ENCODE measurements at regions of chr1 and their contacts with region 1.

Region 1: DNA sequence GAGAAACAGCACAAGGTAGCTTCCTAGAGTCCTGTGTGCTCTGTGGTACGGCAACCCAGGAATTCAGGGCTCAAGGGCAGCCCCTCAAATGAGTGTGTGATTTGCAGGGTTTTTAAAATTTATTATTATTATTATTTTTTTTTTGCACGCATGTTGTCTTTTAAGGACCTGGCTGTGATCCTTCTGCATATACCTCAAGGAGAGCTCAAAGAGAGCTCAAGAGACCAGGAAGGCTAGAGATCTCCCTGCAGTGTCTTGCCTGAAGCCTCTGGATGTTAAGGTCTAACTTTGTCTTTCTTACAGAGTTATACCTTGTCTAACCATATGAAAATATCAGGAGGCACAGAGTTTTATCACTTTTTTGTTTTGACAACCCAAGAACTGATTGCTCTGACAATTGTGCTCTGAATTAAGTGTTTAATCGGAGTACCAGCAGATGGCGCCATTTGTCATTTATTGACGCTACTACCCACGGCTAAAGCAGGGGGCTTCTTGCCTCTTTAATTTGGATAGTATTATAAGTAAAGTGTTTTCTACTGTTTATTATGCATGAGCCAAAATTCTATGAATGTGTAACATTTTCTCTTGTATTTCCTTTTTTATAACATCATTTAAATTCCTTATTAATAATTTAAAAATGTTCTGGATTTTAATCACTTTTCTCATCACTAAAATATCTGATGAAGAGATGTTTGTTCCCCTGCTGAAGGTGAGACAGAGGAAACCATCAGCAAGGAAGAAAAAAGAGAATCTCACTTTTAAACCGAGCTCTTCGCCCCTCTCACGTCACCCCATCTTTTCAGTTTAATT is 35.8 kb upstream of the LMO4 start:
- DNase-seq: peak in 8 of 9 donors; percentile 6 to 55 (median 40)
- ATAC-seq: peak; percentile 57
- H3K4me3 ChIP-seq: no peak overlapping the region
- H3K4me3 Mint-ChIP-seq: no peak overlapping the region
- H3K27ac ChIP-seq: no peak overlapping the region
- H3K27ac Mint-ChIP-seq: no peak overlapping the region
- H3K4me1 ChIP-seq: no peaks in the 10 kb centered on the region
- H3K4me1 Mint-ChIP-seq: no peaks in the 10 kb centered on the region
- H3K27me3 ChIP-seq: no peaks in the 10 kb centered on the region
- H3K27me3 Mint-ChIP-seq: peaks cover 5 to 15% (median 8%) of the 10 kb centered on the region in 5 donors

Region 2: GRCh38 chr1:87131809-87132283 is 161.0 kb before region 1 on chr1:
- CTCF ChIA-PET with region 1: no interaction called
- POLR2A ChIA-PET with region 1: no interaction called
- intact Hi-C with region 1: loop called in 1 of 2 experiments (anchors 5 kb)
- DNase-seq: peak; percentile 35 to 80 (median 69)
- ATAC-seq: peak; percentile 94
- H3K4me3 ChIP-seq: peak overlapping the region; percentile 90
- H3K4me3 Mint-ChIP-seq: peak overlapping the region; percentile 79 to 88 (median 83)
- H3K27ac ChIP-seq: no peak overlapping the region
- H3K27ac Mint-ChIP-seq: no peak overlapping the region
- H3K4me1 ChIP-seq: no peaks in the 10 kb centered on the region
- H3K4me1 Mint-ChIP-seq: peaks cover 0 to 13% (median 9%) of the 10 kb centered on the region in 7 donors
- H3K27me3 ChIP-seq: no peaks in the 10 kb centered on the region
- H3K27me3 Mint-ChIP-seq: peaks cover 34 to 43% (median 40%) of the 10 kb centered on the region in 5 donors

Region 3: GRCh38 chr1:87450615-87451207 is 157.8 kb after region 1 on chr1:
- CTCF ChIA-PET with region 1: no interaction called
- POLR2A ChIA-PET with region 1: no interaction called
- intact Hi-C with region 1: loop called in 1 of 2 experiments (anchors 1 kb)
- DNase-seq: peak in 4 of 9 donors; percentile 1 to 9 (median 4)
- ATAC-seq: no peak
- H3K4me3 ChIP-seq: no peak overlapping the region
- H3K4me3 Mint-ChIP-seq: no peak overlapping the region
- H3K27ac ChIP-seq: no peak overlapping the region
- H3K27ac Mint-ChIP-seq: no peak overlapping the region
- H3K4me1 ChIP-seq: peaks cover 0 to 7% of the 10 kb centered on the region in 2 donors
- H3K4me1 Mint-ChIP-seq: peaks cover 0 to 3% (median 0%) of the 10 kb centered on the region in 7 donors
- H3K27me3 ChIP-seq: no peaks in the 10 kb centered on the region
- H3K27me3 Mint-ChIP-seq: peaks cover 0 to 8% (median 0%) of the 10 kb centered on the region in 5 donors

Region 4: GRCh38 chr1:87696483-87696882 is 403.6 kb after region 1 on chr1:
- CTCF ChIA-PET with region 1: no interaction called
- POLR2A ChIA-PET with region 1: no interaction called
- intact Hi-C with region 1: loop called in 1 of 2 experiments (anchors 10 kb)
- DNase-seq: no peak
- ATAC-seq: no peak
- H3K4me3 ChIP-seq: no peak overlapping the region
- H3K4me3 Mint-ChIP-seq: no peak overlapping the region
- H3K27ac ChIP-seq: no peak overlapping the region
- H3K27ac Mint-ChIP-seq: no peak overlapping the region
- H3K4me1 ChIP-seq: no peaks in the 10 kb centered on the region
- H3K4me1 Mint-ChIP-seq: no peaks in the 10 kb centered on the region
- H3K27me3 ChIP-seq: no peaks in the 10 kb centered on the region
- H3K27me3 Mint-ChIP-seq: peaks cover 0 to 4% (median 3%) of the 10 kb centered on the region in 5 donors

Region 5: DNA sequence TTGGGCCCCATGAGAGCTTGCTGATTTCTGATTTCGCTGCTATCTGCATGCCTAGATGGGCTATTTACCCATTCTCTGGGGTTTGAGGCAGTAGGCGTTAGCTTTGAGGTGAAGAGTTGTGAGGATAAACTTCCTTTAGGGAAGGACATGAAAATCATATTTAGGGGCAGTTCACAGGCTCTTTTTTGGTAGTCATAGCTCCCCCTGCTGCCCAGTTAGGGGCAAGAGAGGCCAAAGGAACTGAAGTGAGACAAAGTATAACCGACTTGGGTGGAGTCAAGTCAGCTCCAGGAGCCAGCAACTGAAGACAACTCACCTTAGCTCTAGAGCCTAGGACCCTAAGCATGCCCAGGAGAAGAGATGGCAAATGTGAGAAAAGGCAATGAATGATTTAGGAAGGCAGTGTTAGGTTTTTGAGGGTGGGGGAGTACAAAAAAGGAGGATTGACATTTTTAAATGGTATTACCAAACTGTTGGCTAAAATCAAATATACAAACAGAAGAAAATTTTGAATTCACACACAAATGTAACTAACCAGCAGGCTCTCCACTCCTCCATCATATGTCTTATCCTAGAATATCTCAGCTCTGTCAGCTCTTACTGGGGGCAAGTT is 660.9 kb after region 1 on chr1:
- CTCF ChIA-PET with region 1: interaction called, 11 read pairs
- POLR2A ChIA-PET with region 1: no interaction called
- intact Hi-C with region 1: loop called in 1 of 2 experiments (anchors 1 kb)
- DNase-seq: peak; percentile 7 to 54 (median 36)
- ATAC-seq: peak; percentile 70
- H3K4me3 ChIP-seq: no peak overlapping the region
- H3K4me3 Mint-ChIP-seq: no peak overlapping the region
- H3K27ac ChIP-seq: no peak overlapping the region
- H3K27ac Mint-ChIP-seq: no peak overlapping the region
- H3K4me1 ChIP-seq: no peaks in the 10 kb centered on the region
- H3K4me1 Mint-ChIP-seq: no peaks in the 10 kb centered on the region
- H3K27me3 ChIP-seq: no peaks in the 10 kb centered on the region
- H3K27me3 Mint-ChIP-seq: peaks cover 4 to 25% (median 8%) of the 10 kb centered on the region in 5 donors

Region 6: GRCh38 chr1:88061492-88062177 is 768.7 kb after region 1 on chr1:
- CTCF ChIA-PET with region 1: no interaction called
- POLR2A ChIA-PET with region 1: no interaction called
- intact Hi-C with region 1: loop called in 1 of 2 experiments (anchors 2 kb)
- DNase-seq: no peak
- ATAC-seq: no peak
- H3K4me3 ChIP-seq: no peak overlapping the region
- H3K4me3 Mint-ChIP-seq: no peak overlapping the region
- H3K27ac ChIP-seq: no peak overlapping the region
- H3K27ac Mint-ChIP-seq: no peak overlapping the region
- H3K4me1 ChIP-seq: no peaks in the 10 kb centered on the region
- H3K4me1 Mint-ChIP-seq: no peaks in the 10 kb centered on the region
- H3K27me3 ChIP-seq: no peaks in the 10 kb centered on the region
- H3K27me3 Mint-ChIP-seq: peaks cover 0 to 5% (median 0%) of the 10 kb centered on the region in 5 donors